Common myeloid progenitor, CD34-positive (primary cell): ENCODE measurements at regions of chr1 and their contacts with region 1.

Region 1: DNA sequence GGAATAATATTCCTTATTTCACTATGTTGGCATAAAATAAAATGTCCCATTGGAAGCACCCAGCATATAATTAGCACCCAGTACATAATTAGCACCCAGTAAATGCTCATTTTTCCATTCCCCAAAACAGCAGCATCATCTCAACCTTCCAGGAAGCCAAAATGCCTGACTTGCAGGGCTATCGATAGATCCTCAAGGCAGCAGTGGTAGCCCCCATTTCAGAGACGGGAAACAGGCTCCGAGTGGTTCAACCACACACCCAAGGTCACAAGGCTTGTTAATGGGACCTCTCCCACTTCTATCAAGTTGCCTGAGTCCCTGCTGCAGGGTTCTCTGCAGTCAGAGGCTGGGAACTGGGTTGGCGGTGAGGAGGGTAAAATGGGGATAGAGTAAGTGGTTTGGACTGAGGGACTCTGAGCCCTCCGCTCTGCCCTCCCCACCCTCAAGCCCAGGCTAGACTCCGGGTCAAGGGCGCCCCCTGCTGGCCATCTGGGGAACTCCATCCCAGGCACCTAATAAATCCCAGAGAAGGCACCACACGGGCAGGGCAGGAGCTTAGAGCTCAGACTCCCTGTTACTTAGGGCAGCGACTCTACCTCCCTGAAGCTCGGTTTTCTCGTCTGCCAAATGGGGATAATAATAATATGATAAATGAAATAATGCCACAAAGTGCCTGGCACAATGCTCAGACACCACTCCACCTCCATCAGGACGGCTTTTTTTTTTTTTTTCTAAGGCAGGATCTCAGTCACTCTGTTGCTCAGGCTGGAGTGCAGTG is 21.9 kb upstream of the LAPTM5 start:
- DNase-seq: peak; percentile 83 to 91 (median 88)
- H3K4me3 ChIP-seq: peak overlapping the region in 1 of 7 experiments; percentile 29
- H3K27ac ChIP-seq: peak overlapping the region in 1 of 2 experiments; percentile 69
- H3K4me1 ChIP-seq: peaks cover 0 to 29% (median 24%) of the 10 kb centered on the region in 4 experiments
- H3K27me3 ChIP-seq: peaks cover 0 to 3% (median 0%) of the 10 kb centered on the region in 5 experiments

Region 2: DNA sequence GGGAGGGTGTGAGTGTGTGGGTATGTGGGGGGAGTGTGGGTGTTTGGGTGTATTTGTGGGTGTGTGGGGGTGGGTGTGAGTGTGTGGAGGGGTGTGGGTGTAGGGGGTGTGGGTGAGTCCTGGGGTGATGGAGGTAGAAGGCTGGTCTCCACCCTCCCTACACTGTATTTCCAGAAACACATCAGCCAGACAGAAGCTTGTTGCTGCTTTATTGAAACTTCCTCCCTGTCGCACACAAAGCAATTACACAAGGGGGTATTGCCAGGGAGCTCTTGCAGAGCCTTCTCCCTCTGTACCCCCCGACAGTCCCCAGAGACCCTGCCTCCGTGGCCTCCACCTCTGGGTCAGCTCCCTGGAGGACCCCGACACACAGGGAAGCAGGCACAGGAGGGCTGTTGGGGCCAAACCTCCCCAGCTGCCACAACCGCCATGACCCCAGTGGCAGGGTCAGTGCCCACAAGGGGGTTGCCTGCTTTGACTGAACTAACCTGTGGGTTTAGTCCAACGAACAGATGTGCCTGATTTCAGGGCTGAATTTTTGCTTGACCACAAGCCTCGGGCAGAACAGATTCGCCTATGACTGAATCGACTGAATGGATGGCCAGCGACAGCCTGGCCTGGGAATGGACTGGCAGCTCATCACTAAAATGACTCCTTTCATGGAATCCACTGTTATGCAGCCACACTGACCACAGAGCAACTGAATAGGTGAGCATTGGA is 47.0 kb before region 1 on chr1:
- CTCF ChIA-PET with region 1: interaction called, 356 read pairs
- POLR2A ChIA-PET with region 1: interaction called, 12 read pairs
- DNase-seq: peak; percentile 38 to 78 (median 64)
- H3K4me3 ChIP-seq: no peak overlapping the region
- H3K27ac ChIP-seq: no peak overlapping the region
- H3K4me1 ChIP-seq: peaks cover 0 to 16% (median 5%) of the 10 kb centered on the region in 4 experiments
- H3K27me3 ChIP-seq: no peaks in the 10 kb centered on the region

Region 3: DNA sequence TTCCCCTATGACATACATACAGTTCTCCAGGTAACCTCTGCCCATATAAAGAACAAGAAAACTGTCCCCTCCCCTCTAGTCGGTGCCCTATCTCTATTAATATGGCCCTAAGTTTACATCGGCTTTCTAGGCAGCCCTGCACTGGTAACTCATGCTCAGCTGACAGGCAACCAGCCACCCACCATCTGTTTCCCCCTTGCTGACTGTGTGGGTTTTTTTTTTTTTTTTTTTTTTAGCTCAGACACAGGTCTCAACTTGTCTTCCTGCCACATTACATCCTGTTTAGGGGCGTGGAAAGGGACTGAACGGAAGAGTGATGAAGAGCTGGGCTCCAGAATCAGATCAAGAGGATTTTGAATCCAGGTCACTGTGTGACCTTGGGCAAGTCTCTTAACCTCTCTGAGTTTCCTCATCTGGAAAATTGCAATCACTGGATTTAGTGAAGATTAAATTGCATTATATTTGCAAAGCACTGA is 35.9 kb before region 1 on chr1:
- CTCF ChIA-PET with region 1: interaction called, 43 read pairs
- POLR2A ChIA-PET with region 1: interaction called, 15 read pairs
- DNase-seq: peak; percentile 90 to 98 (median 97)
- H3K4me3 ChIP-seq: peak overlapping the region in 2 of 7 experiments; percentile 0 to 20
- H3K27ac ChIP-seq: peak overlapping the region in 1 of 2 experiments; percentile 56
- H3K4me1 ChIP-seq: peaks cover 14 to 98% (median 93%) of the 10 kb centered on the region in 4 experiments
- H3K27me3 ChIP-seq: no peaks in the 10 kb centered on the region

Region 4: DNA sequence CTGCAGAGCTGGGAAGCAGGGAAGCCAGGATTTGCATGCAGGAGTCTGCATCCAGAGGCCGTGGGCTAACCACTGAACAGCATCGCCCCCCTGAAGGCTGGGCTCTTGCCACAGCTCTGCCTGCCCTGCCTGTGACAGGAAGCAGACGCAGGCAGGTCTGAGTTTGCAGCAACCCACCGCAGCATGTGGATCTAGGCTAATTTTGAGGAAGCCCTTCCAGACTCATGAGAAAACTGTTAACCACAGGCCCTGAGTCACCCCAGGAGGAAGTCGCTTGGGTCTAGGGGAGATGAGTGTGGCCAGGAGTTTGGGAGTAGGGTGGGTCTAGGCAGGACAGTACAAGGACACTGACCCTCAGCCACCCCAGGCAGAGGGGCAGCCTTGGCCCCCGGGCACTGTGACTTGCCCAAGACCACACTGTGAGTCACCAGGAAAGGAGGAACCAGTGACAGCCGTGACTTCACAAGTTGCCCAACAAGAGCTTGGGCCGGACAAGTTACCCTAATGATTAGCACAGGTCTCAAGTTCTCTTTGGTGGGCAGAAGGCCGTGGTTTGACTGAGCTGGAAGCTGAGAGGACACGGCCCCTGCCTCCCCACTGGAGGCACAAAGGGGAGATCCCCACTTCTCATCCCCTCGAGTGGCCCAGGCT is 22.8 kb before region 1 on chr1:
- CTCF ChIA-PET with region 1: interaction called, 58 read pairs
- POLR2A ChIA-PET with region 1: interaction called, 24 read pairs
- DNase-seq: peak; percentile 97 to 100 (median 99)
- H3K4me3 ChIP-seq: peak overlapping the region; percentile 51 to 96 (median 93)
- H3K27ac ChIP-seq: peak overlapping the region; percentile 97 to 99
- H3K4me1 ChIP-seq: peaks cover 51 to 98% (median 91%) of the 10 kb centered on the region in 4 experiments
- H3K27me3 ChIP-seq: no peaks in the 10 kb centered on the region

Region 5: GRCh38 chr1:30768830-30769718 is 10.4 kb before region 1 on chr1:
- CTCF ChIA-PET with region 1: interaction called, 23 read pairs
- POLR2A ChIA-PET with region 1: interaction called, 3 read pairs
- DNase-seq: peak; percentile 94 to 99 (median 99)
- H3K4me3 ChIP-seq: peak overlapping the region in 3 of 7 experiments; percentile 2 to 54 (median 13)
- H3K27ac ChIP-seq: peak overlapping the region in 1 of 2 experiments; percentile 83
- H3K4me1 ChIP-seq: peaks cover 9 to 35% (median 31%) of the 10 kb centered on the region in 4 experiments
- H3K27me3 ChIP-seq: no peaks in the 10 kb centered on the region

Region 6: DNA sequence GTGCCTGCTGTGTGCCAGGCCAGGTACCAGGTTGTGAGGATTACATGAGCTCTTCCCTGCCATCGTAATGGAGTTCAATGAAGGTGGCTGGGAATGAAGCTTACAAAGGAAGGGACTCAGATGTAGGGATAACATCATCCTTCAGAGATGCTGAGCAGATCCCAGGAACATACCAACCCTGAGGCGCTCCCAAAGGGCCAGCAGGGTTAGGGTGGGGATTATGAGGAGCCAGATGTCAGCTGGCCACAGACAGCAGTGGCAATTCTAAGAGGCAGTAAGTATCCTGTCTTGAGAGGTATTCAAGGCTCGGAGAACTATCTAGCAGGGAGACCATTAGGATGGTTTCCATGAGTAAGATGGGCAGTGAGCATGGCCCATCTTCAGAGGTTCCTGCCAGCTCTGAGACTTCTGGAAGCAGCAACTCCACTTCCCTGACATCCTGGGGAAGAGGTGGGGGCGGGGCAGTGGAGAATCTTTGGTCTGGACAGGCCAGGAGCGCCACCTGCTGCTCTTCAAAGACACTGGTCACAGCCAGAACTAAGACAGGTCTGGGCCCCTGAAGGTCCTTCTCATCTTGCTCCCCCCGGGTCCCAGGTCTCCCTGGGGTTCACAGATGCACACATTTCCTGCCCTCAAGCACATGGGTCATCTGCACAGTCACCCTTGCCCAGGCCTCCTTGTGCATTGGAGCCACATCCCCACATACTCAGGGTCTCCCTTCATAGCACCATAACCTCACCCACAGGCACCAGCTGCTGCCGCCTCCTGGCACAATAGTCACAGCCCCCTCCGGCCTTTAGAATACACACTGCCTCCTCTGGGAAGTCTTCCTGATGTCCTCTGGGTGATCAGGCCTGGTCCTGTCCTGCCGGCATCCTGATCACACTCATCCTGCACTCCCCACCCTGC is 131.8 kb after region 1 on chr1:
- CTCF ChIA-PET with region 1: interaction called, 96 read pairs
- POLR2A ChIA-PET with region 1: no interaction called
- DNase-seq: peak; percentile 62 to 76 (median 69)
- H3K4me3 ChIP-seq: no peak overlapping the region
- H3K27ac ChIP-seq: no peak overlapping the region
- H3K4me1 ChIP-seq: peaks cover 0 to 29% (median 16%) of the 10 kb centered on the region in 4 experiments
- H3K27me3 ChIP-seq: peaks cover 0 to 44% (median 33%) of the 10 kb centered on the region in 5 experiments

Region 7: DNA sequence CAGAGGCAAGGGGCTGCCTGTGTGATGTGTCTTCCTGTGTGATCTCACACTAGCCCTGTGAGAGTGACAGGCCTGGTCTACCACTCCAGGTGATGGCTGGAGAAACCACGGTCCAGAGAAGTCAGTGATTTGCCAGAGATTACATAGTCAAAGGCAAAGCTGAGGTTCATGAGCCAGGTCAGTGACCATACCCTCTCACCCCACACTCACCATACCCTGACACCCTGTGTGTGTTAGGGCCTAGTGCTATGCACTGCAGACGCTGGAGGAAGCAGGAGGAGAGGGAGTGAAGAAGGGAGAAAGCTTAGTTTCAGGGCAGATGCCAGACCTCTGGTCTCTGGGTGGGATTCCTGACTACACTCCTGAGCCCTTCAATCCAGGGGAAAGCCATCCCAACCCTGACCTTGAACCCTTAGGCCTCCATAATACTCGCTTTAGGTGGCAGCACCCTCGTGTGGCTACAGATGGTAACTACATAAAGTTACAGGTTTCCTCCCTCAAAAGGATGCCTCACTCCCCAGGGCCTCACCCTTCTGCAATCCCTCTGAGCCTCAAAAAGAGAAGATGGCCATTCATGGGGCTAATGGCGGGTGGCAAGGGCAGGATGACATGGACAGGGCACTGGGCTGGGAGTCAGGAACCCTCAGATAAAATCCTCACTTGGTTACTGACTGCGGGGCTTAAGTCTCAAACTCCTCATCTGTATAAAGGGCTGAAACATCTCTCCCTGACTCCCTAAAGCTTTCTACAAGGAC is 149.8 kb after region 1 on chr1:
- CTCF ChIA-PET with region 1: interaction called, 13 read pairs
- POLR2A ChIA-PET with region 1: no interaction called
- DNase-seq: peak; percentile 39 to 70 (median 59)
- H3K4me3 ChIP-seq: no peak overlapping the region
- H3K27ac ChIP-seq: no peak overlapping the region
- H3K4me1 ChIP-seq: no peaks in the 10 kb centered on the region
- H3K27me3 ChIP-seq: no peaks in the 10 kb centered on the region